H1 (cell line): ENCODE measurements at regions of chr10 and their contacts with region 1.

Region 1: GRCh38 chr10:111598436-111599059 is 521.7 kb downstream of the ADRA2A start:
- DNase-seq: peak; percentile 39 to 68
- H3K4me3 ChIP-seq: no peak overlapping the region
- H3K27ac ChIP-seq: no peak overlapping the region
- H3K4me1 ChIP-seq: peaks cover 0 to 3% (median 0%) of the 10 kb centered on the region in 4 experiments; a peak in 1 of 7 replicates
- H3K27me3 ChIP-seq: no peaks in the 10 kb centered on the region
- CTCF ChIP-seq: peak; percentile 23 to 90 (median 71)
- EP300 ChIP-seq: no peak
- POLR2A ChIP-seq: no peak
- RAD21 ChIP-seq: peak; percentile 72 to 87

Region 2: DNA sequence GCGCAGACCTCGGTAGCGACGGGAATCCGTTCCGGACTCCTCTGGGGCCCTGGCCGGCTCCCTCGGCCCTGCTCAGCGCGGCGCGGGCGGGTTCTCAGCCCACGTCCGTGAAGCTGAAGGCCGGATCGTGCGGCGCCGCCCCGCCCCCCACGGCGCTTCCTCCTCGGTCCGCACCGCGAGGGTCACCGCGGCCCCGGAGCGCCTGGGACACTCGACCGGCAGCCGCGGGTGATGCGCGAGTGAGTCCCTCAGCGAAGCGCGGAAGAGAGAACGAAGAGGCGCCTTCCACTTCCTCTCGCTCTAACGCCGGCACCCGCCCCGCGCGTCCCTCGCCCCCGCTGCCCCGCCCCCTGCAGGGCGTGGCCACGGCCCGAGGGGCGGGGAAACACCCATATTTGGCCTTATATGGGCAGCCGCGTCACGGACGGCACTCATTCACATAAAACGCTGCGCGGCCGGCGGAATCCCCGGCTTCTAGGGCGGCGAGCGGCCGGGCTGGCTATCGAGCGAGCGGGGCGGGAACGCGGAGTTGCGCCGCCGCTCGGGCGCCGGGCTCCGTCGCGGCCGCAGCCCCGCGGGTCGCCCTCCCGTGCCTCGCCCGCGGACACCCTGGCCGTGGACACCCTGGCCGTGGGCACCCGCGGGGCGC is 1101.0 kb before region 1 on chr10 and contains the start of gene DUSP5:
- CTCF ChIA-PET with region 1: no interaction called
- POLR2A ChIA-PET with region 1: no interaction called
- DNase-seq: peak; percentile 56 to 94
- H3K4me3 ChIP-seq: peak within 1 kb of the TSS; percentile 65 to 96 (median 80)
- H3K27ac ChIP-seq: peak within 1 kb of the TSS; percentile 62; the same call in 1 of the 2 replicates
- H3K4me1 ChIP-seq: peaks cover 12 to 33% (median 23%) of the 10 kb centered on the region in 4 experiments
- H3K27me3 ChIP-seq: peaks cover 0 to 34% (median 17%) of the 10 kb centered on the region in 4 experiments; a peak in 5 of 7 replicates
- CTCF ChIP-seq: no peak
- EP300 ChIP-seq: no peak
- POLR2A ChIP-seq: peak; percentile 84 to 94
- RAD21 ChIP-seq: no peak
- total RNA-seq, gene DUSP5: 27.0 and 30.3 TPM in 2 replicates

Region 3: DNA sequence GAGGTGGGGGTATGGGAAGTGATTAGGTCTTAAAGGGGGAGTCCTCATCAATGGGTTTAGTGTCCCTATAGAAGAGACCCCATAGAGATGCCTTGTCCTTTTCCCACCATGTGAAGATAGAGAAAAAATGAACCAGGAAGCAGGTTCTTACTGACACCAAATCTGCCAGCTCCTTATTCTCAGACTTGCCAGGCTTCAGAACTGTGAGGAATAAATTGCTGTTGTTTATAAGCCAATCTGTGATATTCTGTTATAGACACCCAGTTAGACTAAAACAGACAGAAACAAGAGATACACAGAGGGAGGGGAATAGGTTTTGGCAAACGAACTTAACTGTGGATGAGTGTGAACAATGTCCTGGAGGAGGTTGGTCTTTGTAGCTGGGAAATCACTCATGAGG is 140.3 kb before region 1 on chr10:
- CTCF ChIA-PET with region 1: no interaction called
- POLR2A ChIA-PET with region 1: no interaction called
- DNase-seq: no peak
- H3K4me3 ChIP-seq: no peak overlapping the region
- H3K27ac ChIP-seq: no peak overlapping the region
- H3K4me1 ChIP-seq: no peaks in the 10 kb centered on the region
- H3K27me3 ChIP-seq: no peaks in the 10 kb centered on the region; a peak in 1 of 7 replicates
- CTCF ChIP-seq: no peak
- EP300 ChIP-seq: no peak
- POLR2A ChIP-seq: no peak
- RAD21 ChIP-seq: no peak

Region 4: GRCh38 chr10:111516144-111516543 is 82.4 kb before region 1 on chr10:
- CTCF ChIA-PET with region 1: interaction called, 10 read pairs
- POLR2A ChIA-PET with region 1: no interaction called
- DNase-seq: no peak
- H3K4me3 ChIP-seq: no peak overlapping the region
- H3K27ac ChIP-seq: no peak overlapping the region
- H3K4me1 ChIP-seq: no peaks in the 10 kb centered on the region
- H3K27me3 ChIP-seq: no peaks in the 10 kb centered on the region
- CTCF ChIP-seq: no peak
- EP300 ChIP-seq: no peak
- POLR2A ChIP-seq: no peak
- RAD21 ChIP-seq: no peak

Region 5: GRCh38 chr10:111578076-111578475 is 20.5 kb before region 1 on chr10:
- CTCF ChIA-PET with region 1: interaction called, 16 read pairs
- POLR2A ChIA-PET with region 1: no interaction called
- DNase-seq: no peak
- H3K4me3 ChIP-seq: no peak overlapping the region
- H3K27ac ChIP-seq: no peak overlapping the region
- H3K4me1 ChIP-seq: no peaks in the 10 kb centered on the region
- H3K27me3 ChIP-seq: peaks cover 0 to 1% (median 0%) of the 10 kb centered on the region in 4 experiments; a peak in 1 of 7 replicates
- CTCF ChIP-seq: no peak
- EP300 ChIP-seq: no peak
- POLR2A ChIP-seq: no peak
- RAD21 ChIP-seq: no peak